ENCODE measurements at regions of chrX and their contacts with region 1.

Region 1: DNA sequence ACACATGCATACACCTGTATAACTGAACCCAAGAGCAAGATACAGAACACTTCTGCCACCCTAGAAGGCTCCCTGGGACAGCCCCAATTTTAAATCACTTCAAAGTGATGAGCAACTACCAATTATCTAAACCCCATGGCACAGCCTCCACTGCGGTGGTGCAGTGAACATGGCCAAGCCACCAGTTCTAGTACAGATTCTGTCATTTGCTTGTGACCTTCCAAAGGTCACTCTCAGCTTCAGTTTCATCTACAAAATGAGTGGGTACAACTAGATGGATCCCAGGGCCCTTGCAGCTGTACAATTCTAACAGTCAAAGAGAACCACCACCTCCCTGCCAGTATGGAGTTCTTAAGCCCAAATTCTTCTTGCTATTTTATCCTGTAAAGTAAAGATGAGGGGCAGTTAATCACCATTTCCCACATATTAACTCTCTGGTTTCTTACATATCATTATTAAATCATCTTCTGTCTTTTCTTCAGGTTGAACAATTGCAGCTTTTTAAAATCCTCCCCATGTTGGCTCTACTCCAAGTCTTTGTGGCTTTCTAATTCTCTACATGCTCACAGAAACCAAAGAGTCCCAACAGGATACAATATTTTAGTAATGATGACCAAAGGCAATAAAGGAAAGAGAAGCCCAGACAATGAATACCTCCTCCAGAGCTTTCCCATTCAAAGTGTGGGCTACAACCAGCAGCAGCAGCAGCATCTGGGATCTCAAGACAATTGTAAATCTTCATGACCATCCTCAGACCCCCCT is 39.0 kb upstream of the GPM6B start:
- DNase-seq: no peak
- ATAC-seq: no peak
- H3K4me3 ChIP-seq: no peak overlapping the region
- H3K27ac ChIP-seq: no peak overlapping the region
- H3K4me1 ChIP-seq: no peaks in the 10 kb centered on the region
- H3K27me3 ChIP-seq: no peaks in the 10 kb centered on the region
- CTCF ChIP-seq: no peak

Region 2: GRCh38 chrX:14003876-14004425 is 148.1 kb after region 1 on chrX:
- CTCF ChIA-PET with region 1: no interaction called
- POLR2A ChIA-PET with region 1: no interaction called
- in situ Hi-C with region 1: no loop called
- intact Hi-C with region 1: no loop called
- DNase-seq: no peak
- ATAC-seq: no peak
- H3K4me3 ChIP-seq: no peak overlapping the region
- H3K27ac ChIP-seq: no peak overlapping the region
- H3K4me1 ChIP-seq: no peaks in the 10 kb centered on the region
- H3K27me3 ChIP-seq: no peaks in the 10 kb centered on the region
- CTCF ChIP-seq: no peak

Region 3: DNA sequence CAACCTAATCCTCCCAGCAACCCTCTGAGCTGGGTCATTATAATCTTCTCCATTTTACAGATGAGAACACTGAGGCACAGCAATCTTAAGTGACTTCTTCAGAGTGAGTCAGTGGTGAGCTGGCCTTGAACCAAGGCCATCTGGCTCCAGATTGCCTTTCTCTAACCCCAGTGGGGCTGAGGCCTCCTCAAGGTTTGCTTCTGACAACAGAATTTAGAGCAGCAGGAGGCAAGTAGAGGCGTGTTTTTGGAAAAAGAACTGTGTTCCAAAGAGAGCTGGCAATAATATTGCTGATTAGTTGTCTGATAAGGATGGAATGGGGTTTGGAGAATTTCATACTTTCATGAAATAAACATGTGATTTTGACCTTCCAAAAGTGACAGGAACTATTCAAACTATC is 1596.1 kb after region 1 on chrX:
- CTCF ChIA-PET with region 1: no interaction called
- POLR2A ChIA-PET with region 1: interaction called, 13 read pairs
- in situ Hi-C with region 1: no loop called
- intact Hi-C with region 1: no loop called
- DNase-seq: no peak
- ATAC-seq: no peak
- H3K4me3 ChIP-seq: no peak overlapping the region
- H3K27ac ChIP-seq: no peak overlapping the region
- H3K4me1 ChIP-seq: no peaks in the 10 kb centered on the region
- H3K27me3 ChIP-seq: no peaks in the 10 kb centered on the region
- CTCF ChIP-seq: no peak

Measured in Panc1 (cell line).